K562 (cell line): ENCODE measurements at regions of chr19 and their contacts with region 1.

Region 1: GRCh38 chr19:46759817-46760333 is 13.6 kb upstream of the STRN4 start:
- DNase-seq: no peak
- ATAC-seq: peak; percentile 16; the same call in 1 of the 3 replicates
- H3K4me3 ChIP-seq: no peak overlapping the region
- H3K27ac ChIP-seq: no peak overlapping the region
- H3K4me1 ChIP-seq: peaks cover 2 to 13% of the 10 kb centered on the region in 2 experiments; a peak in 4 of 5 replicates
- H3K27me3 ChIP-seq: no peaks in the 10 kb centered on the region
- CTCF ChIP-seq: no peak
- EP300 ChIP-seq: no peak
- POLR2A ChIP-seq: no peak
- RAD21 ChIP-seq: no peak

Region 2: GRCh38 chr19:46825525-46825971 is 65.7 kb after region 1 on chr19:
- CTCF ChIA-PET with region 1: interaction called, 3 read pairs
- POLR2A ChIA-PET with region 1: no interaction called
- in situ Hi-C with region 1: no loop called
- intact Hi-C with region 1: loop called (anchors 5 kb)
- DNase-seq: no peak
- ATAC-seq: peak; percentile 44
- H3K4me3 ChIP-seq: no peak overlapping the region
- H3K27ac ChIP-seq: no peak overlapping the region
- H3K4me1 ChIP-seq: peaks cover 0 to 18% of the 10 kb centered on the region in 2 experiments; a peak in 4 of 5 replicates
- H3K27me3 ChIP-seq: no peaks in the 10 kb centered on the region
- CTCF ChIP-seq: peak in 1 of 3 experiments; percentile 57; a peak in 2 of 6 replicates
- EP300 ChIP-seq: no peak
- POLR2A ChIP-seq: no peak
- RAD21 ChIP-seq: peak in 1 of 2 experiments; percentile 49; a peak in 2 of 4 replicates